ENCODE measurements at regions of chr6 and their contacts with region 1.

Region 1: DNA sequence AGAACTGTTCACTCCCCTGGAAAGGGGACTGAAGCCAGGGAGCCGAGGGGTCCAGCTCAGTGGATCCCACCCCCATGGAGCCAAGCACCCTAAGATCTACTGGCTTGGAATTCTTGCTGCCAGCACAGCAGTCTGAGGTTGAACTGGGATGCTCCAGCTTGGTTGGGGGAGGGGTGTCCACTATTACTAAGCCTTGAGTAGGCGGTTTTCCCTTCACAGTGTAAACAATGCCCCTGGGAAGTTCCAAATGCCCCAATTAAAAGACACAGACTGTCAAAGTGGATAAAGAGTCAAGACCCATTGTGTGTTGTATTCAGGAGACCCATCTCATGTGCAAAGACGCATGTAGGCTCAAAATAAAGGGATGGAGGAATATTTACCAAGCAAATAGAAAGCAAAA is 150.2 kb downstream of the LPA start:
- DNase-seq: no peak
- ATAC-seq: no peak
- H3K4me3 ChIP-seq: no peak overlapping the region
- H3K27ac ChIP-seq: no peak overlapping the region
- H3K4me1 ChIP-seq: no peaks in the 10 kb centered on the region
- H3K27me3 ChIP-seq: no peaks in the 10 kb centered on the region
- CTCF ChIP-seq: no peak
- POLR2A ChIP-seq: no peak
- RAD21 ChIP-seq: no peak

Region 2: DNA sequence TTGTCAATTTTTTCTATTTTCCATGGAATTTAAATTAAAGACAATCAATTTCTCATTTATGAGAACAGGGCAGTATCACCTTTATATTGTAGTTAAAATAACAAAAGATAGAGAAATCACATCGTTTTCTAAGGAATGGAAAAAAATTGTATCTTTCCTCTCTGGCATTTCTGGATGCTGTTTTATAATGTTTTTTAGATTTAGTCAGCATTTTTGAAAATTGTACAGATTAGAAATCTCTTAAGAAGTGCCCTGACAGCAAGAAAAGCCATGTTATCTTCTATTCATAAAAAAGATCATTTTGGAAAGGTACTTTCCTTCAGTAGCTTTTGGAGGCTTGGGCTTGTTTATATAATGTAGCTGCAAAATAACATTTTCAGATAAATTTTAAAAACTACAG is 305.1 kb after region 1 on chr6:
- CTCF ChIA-PET with region 1: no interaction called
- POLR2A ChIA-PET with region 1: interaction called, 17 read pairs
- dilution Hi-C with region 1: no loop called
- in situ Hi-C with region 1: no loop called
- intact Hi-C with region 1: no loop called
- DNase-seq: no peak
- ATAC-seq: no peak
- H3K4me3 ChIP-seq: no peak overlapping the region
- H3K27ac ChIP-seq: no peak overlapping the region
- H3K4me1 ChIP-seq: no peaks in the 10 kb centered on the region
- H3K27me3 ChIP-seq: no peaks in the 10 kb centered on the region
- CTCF ChIP-seq: no peak
- POLR2A ChIP-seq: no peak
- RAD21 ChIP-seq: no peak